PC-3 (cell line): ENCODE measurements at regions of chr1 and their contacts with region 1.

Region 1: DNA sequence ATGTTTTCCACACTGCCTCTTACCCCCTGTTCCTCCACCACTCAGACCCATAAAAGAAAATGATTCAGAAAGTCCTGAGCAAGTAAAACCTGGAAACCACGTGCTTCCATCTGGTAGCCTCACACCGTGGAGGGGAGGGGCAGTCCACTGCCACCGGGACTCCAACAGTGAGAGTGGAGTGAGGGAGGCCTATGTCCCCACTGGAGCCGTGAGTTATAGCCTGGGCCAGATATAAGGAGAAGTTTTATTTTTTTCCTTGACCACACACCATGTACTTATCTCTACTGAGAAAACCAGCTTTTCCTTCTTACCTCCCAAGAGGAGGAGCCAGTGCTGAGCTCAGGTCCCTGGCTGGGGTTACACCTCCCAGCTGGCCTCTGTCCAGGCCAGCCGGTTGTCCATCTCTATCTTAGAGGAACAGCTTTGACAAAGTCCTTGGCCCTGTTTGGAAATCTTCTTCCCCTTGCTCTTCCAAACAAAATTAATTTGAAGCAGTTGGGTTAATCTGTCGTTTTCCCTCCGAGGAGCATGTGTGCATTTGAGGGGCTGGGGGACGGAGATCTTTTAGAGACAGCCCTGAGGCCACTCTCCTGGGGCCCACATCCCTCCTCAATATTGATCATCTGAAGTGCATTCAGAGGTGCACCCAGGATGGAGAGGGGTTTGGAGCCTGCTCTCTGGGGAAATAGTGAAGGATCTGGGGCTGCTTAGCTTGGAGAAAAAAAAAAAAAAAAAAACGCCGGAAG is 49.1 kb upstream of the SERBP1 start:
- DNase-seq: peak; percentile 57
- ATAC-seq: peak; percentile 93
- H3K4me3 ChIP-seq: no peak overlapping the region
- H3K27ac ChIP-seq: no peak overlapping the region
- H3K4me1 ChIP-seq: peaks cover 7% of the 10 kb centered on the region; the same call in 1 of the 2 replicates
- H3K27me3 ChIP-seq: no peaks in the 10 kb centered on the region
- CTCF ChIP-seq: no peak

Region 2: GRCh38 chr1:67404212-67404620 is 75.1 kb before region 1 on chr1:
- CTCF ChIA-PET with region 1: no interaction called
- POLR2A ChIA-PET with region 1: no interaction called
- intact Hi-C with region 1: loop called (anchors 2 kb)
- DNase-seq: no peak
- ATAC-seq: no peak
- H3K4me3 ChIP-seq: no peak overlapping the region
- H3K27ac ChIP-seq: no peak overlapping the region
- H3K4me1 ChIP-seq: peaks cover 11% of the 10 kb centered on the region
- H3K27me3 ChIP-seq: no peaks in the 10 kb centered on the region
- CTCF ChIP-seq: no peak

Region 3: DNA sequence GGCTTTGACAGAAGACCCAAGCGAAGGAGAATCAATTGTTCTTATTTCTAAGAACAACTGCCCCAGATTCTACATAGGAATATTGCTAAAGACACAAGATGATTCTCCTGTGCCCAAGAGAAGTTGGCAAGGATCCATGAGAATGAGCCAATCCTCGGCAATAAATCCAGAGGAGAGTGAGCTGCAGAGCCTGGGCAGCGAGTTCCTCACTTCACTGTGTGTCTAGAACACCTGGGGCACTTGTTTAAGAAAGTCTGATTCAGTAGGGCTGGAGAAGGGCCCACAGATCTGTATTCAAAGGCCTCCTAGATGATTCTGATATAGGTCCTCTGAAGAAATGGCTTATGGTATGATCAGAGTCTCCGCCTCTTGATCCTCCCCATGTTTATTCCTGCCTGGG is 237.5 kb after region 1 on chr1:
- CTCF ChIA-PET with region 1: no interaction called
- POLR2A ChIA-PET with region 1: no interaction called
- intact Hi-C with region 1: no loop called
- DNase-seq: peak; percentile 88
- ATAC-seq: peak; percentile 54
- H3K4me3 ChIP-seq: no peak overlapping the region
- H3K27ac ChIP-seq: peak overlapping the region; percentile 27
- H3K4me1 ChIP-seq: peaks cover 56% of the 10 kb centered on the region
- H3K27me3 ChIP-seq: no peaks in the 10 kb centered on the region
- CTCF ChIP-seq: no peak